ENCODE measurements at regions of chr2 and their contacts with region 1.

Region 1: GRCh38 chr2:226661789-226662545 is 137.7 kb downstream of the IRS1 start:
- DNase-seq: peak in 1 of 2 donors; percentile 85
- H3K4me3 ChIP-seq: no peak overlapping the region
- H3K27ac ChIP-seq: peak overlapping the region; percentile 83
- H3K4me1 ChIP-seq: peaks cover 8 to 31% of the 10 kb centered on the region in 2 donors
- H3K27me3 ChIP-seq: no peaks in the 10 kb centered on the region
- CTCF ChIP-seq: no peak

Region 2: GRCh38 chr2:226478109-226478809 is 183.7 kb before region 1 on chr2:
- intact Hi-C with region 1: loop called (anchors 2 kb)
- DNase-seq: peak; percentile 28 to 82
- H3K4me3 ChIP-seq: peak overlapping the region in 1 of 2 donors; percentile 8
- H3K27ac ChIP-seq: peak overlapping the region; percentile 74 to 82
- H3K4me1 ChIP-seq: peaks cover 6 to 8% of the 10 kb centered on the region in 2 donors
- H3K27me3 ChIP-seq: no peaks in the 10 kb centered on the region
- CTCF ChIP-seq: no peak

Region 3: DNA sequence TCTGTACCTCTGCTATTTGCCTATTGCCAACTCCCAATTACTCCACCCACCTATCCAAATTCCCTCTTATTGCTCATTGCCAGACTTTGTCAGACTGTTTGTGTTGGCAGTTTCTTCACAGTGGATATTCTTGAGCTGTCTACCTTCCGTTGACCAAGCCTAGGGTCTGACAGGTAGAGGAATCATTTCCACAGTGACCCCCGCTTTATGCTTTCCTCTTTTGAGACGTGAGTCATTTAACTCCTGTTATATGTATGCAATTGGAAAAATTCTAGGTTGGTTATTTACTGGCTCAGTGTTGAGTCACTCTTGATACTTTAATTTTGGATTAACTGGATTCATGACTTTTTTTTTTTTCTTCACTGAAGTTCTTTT is 50.0 kb before region 1 on chr2:
- intact Hi-C with region 1: loop called (anchors 5 kb)
- DNase-seq: no peak
- H3K4me3 ChIP-seq: no peak overlapping the region
- H3K27ac ChIP-seq: peak overlapping the region; percentile 38 to 57
- H3K4me1 ChIP-seq: peaks cover 0 to 10% of the 10 kb centered on the region in 2 donors
- H3K27me3 ChIP-seq: no peaks in the 10 kb centered on the region
- CTCF ChIP-seq: no peak

Region 4: GRCh38 chr2:226683196-226683595 is 21.2 kb after region 1 on chr2:
- intact Hi-C with region 1: no loop called
- DNase-seq: no peak
- H3K4me3 ChIP-seq: no peak overlapping the region
- H3K27ac ChIP-seq: no peak overlapping the region
- H3K4me1 ChIP-seq: no peaks in the 10 kb centered on the region
- H3K27me3 ChIP-seq: no peaks in the 10 kb centered on the region
- CTCF ChIP-seq: no peak

Region 5: GRCh38 chr2:226721541-226721940 is 59.6 kb after region 1 on chr2:
- intact Hi-C with region 1: loop called (anchors 2 kb)
- DNase-seq: no peak
- H3K4me3 ChIP-seq: no peak overlapping the region
- H3K27ac ChIP-seq: no peak overlapping the region
- H3K4me1 ChIP-seq: peaks cover 0 to 6% of the 10 kb centered on the region in 2 donors
- H3K27me3 ChIP-seq: no peaks in the 10 kb centered on the region
- CTCF ChIP-seq: no peak

Region 6: DNA sequence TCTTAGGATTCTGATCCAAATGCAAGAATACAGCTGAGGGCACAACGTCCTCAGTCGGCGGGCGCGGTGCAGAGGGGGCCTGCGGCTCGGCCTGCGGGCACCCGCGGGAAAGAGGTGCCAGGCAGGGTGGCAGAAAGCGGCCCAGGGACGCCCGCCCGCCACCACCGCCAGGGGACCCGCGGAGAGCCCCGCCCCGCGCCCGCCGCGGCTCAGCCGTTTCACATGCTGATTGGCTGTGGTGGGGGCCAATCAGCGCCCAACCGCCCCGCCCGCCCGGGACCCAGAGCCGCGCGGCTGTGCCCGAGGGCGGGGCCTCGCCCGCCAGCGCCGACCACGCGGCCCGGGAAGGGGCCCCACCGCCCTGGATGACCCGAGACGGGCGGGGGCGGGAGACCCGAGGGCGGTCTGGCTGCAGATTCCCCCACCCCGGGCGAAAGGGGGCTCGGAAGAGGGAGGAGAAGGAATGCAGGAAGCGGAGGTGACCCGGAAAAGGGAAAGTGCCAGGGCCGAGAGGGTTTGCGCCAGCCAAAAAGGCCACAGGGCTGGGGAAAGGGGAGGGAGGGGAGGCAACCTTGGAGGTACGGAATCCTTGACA is 129.6 kb after region 1 on chr2:
- intact Hi-C with region 1: loop called (anchors 2 kb)
- DNase-seq: peak; percentile 46 to 95
- H3K4me3 ChIP-seq: peak overlapping the region; percentile 70 to 75
- H3K27ac ChIP-seq: peak overlapping the region; percentile 93 to 94
- H3K4me1 ChIP-seq: peaks cover 9 to 34% of the 10 kb centered on the region in 2 donors
- H3K27me3 ChIP-seq: no peaks in the 10 kb centered on the region
- CTCF ChIP-seq: peak in 2 of 3 experiments; percentile 39 to 74

Region 7: GRCh38 chr2:226977775-226978190 is 315.8 kb after region 1 on chr2:
- intact Hi-C with region 1: loop called (anchors 10 kb)
- DNase-seq: no peak
- H3K4me3 ChIP-seq: no peak overlapping the region
- H3K27ac ChIP-seq: no peak overlapping the region
- H3K4me1 ChIP-seq: no peaks in the 10 kb centered on the region
- H3K27me3 ChIP-seq: no peaks in the 10 kb centered on the region
- CTCF ChIP-seq: no peak